Activated CD4-positive, alpha-beta T cell treated with anti-CD3 and anti-CD28 coated beads, Interleukin-2, amount 10 ng/mL, durations not matched to agents 7 days and 5 days (primary cell): ENCODE measurements at regions of chr3 and their contacts with region 1.

Region 1: GRCh38 chr3:128680602-128681368 is 30.2 kb upstream of the RPN1 start:
- DNase-seq: peak; percentile 97
- H3K4me3 Mint-ChIP-seq: peak overlapping the region; percentile 85
- H3K27ac Mint-ChIP-seq: peak overlapping the region; percentile 95
- H3K4me1 Mint-ChIP-seq: peaks cover 42% of the 10 kb centered on the region
- H3K27me3 Mint-ChIP-seq: peaks cover 2% of the 10 kb centered on the region

Region 2: DNA sequence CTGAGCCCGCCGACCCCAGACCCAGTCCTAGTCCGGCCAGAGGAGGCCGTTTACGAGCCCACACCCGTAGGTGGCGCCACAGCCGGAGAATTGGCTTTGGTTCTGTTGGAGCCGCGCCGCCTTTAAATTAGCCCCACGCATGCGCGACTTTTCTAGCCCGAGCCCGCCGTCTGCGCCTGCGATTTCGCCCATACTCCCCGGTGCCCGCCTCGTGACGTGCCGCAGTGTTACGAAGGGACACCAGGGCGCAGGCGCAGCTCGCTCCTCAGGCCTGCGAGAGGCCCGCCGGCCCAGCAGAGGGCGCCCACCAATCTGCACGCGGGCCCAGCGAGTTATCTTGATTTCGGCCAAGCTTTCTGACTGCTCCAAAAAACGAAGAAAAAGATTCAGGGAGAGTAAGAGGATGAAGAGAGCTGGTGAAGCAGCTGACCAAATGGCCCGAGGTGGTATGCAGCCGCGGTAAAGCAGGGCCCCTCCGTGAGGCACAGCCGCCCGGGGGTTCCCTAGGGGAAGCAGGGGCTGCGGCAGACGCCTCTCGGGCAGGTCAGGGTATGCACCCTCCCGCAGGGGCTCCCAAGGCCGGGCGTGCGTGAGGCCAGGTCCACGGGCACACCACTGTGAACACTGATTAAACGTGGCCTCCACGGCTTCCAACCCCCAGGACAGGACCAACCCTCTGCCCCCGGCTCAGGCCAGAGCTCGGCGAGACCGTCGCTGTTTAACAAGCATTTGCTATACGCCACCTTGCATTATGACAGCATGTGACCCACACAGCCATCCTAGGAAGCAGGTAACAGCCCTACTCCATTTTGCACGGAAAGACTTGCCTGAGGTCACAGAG is 63.0 kb before region 1 on chr3:
- CTCF ChIA-PET with region 1: interaction called, 13 read pairs
- POLR2A ChIA-PET with region 1: no interaction called
- DNase-seq: peak; percentile 99
- H3K4me3 Mint-ChIP-seq: peak overlapping the region; percentile 83
- H3K27ac Mint-ChIP-seq: peak overlapping the region; percentile 88
- H3K4me1 Mint-ChIP-seq: peaks cover 39% of the 10 kb centered on the region
- H3K27me3 Mint-ChIP-seq: no peaks in the 10 kb centered on the region

Region 3: GRCh38 chr3:128667641-128668040 is 13.1 kb before region 1 on chr3:
- CTCF ChIA-PET with region 1: interaction called, 17 read pairs
- POLR2A ChIA-PET with region 1: no interaction called
- DNase-seq: no peak
- H3K4me3 Mint-ChIP-seq: no peak overlapping the region
- H3K27ac Mint-ChIP-seq: no peak overlapping the region
- H3K4me1 Mint-ChIP-seq: peaks cover 1% of the 10 kb centered on the region
- H3K27me3 Mint-ChIP-seq: peaks cover 22% of the 10 kb centered on the region

Region 4: DNA sequence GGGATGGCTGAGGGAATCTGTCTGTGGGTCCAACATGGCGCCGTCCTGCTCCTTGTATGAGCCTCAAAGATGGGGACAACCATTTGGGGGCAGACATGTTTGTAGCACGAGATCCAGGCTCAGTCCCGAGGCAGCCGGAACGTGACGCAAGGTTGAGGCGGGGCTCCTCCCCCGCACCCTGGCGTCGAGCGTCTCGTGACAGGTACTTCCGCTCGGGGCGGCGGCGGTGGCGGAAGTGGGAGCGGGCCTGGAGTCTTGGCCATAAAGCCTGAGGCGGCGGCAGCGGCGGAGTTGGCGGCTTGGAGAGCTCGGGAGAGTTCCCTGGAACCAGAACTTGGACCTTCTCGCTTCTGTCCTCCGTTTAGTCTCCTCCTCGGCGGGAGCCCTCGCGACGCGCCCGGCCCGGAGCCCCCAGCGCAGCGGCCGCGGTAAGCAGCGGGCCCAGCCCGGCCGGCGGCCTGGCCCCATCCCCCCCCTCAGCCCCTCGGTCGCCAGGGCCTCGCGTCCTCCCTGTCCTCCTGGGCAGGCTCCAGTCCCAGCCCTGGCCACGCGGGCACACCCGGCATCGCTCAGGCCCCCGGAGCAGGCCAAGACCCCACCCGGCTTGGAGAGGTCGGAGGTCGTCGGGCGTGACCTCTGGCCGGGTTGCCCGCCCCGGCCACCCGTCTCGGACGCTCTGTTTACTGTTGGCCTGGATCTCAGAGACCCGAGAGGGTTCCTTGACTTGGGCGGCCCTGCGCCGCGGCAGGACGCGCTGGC is 45.3 kb after region 1 on chr3 and contains the start of gene RAB7A:
- CTCF ChIA-PET with region 1: interaction called, 12 read pairs
- POLR2A ChIA-PET with region 1: interaction called, 4 read pairs
- DNase-seq: peak; percentile 98
- H3K4me3 Mint-ChIP-seq: peak within 1 kb of the TSS; percentile 81
- H3K27ac Mint-ChIP-seq: peak within 1 kb of the TSS; percentile 93
- H3K4me1 Mint-ChIP-seq: peaks cover 55% of the 10 kb centered on the region
- H3K27me3 Mint-ChIP-seq: peaks cover 2% of the 10 kb centered on the region
- total RNA-seq, gene RAB7A: 226 to 264 TPM

Region 5: DNA sequence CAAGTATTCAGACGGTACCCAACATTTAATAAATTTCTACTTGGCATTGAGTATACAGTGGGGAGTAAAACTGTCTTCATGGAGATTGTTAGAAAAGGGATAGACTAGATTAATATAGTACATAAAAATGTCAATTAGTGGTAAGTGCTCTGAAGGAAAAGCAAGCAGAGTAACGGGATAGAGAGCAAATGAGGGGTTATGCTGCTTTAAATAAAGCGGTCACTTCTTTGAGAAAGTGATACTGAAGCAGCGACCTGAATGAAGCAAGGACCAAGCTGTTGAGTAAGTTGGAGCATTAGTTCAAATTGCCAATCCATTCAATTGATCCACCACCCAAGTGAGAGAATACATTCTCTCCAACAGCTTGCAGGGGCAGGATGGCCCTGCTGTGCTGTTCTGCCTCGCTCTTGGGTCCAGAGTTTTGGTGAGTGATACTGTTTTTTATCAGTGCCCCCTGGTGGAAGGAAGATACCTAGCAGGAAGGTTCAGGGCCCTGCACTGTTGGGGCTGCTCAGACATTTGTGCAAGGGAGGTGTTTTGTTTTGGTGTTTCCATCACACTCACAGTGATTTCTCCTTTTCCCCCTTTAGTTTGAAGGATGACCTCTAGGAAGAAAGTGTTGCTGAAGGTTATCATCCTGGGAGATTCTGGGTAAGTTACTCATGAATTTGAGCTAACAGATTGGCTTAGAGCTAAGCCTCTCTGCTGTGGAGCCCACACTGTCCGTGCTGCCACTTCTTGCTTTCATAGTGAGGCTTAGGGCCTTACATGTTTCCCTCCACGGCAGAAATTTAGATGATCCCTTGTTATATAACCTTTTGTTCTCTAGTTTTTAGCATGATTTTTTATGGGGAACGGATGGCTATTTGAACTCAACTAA is 114.2 kb after region 1 on chr3:
- CTCF ChIA-PET with region 1: interaction called, 22 read pairs
- POLR2A ChIA-PET with region 1: interaction called, 4 read pairs
- DNase-seq: peak; percentile 80
- H3K4me3 Mint-ChIP-seq: peak overlapping the region; percentile 1
- H3K27ac Mint-ChIP-seq: peak overlapping the region; percentile 67
- H3K4me1 Mint-ChIP-seq: peaks cover 80% of the 10 kb centered on the region
- H3K27me3 Mint-ChIP-seq: no peaks in the 10 kb centered on the region

Region 6: DNA sequence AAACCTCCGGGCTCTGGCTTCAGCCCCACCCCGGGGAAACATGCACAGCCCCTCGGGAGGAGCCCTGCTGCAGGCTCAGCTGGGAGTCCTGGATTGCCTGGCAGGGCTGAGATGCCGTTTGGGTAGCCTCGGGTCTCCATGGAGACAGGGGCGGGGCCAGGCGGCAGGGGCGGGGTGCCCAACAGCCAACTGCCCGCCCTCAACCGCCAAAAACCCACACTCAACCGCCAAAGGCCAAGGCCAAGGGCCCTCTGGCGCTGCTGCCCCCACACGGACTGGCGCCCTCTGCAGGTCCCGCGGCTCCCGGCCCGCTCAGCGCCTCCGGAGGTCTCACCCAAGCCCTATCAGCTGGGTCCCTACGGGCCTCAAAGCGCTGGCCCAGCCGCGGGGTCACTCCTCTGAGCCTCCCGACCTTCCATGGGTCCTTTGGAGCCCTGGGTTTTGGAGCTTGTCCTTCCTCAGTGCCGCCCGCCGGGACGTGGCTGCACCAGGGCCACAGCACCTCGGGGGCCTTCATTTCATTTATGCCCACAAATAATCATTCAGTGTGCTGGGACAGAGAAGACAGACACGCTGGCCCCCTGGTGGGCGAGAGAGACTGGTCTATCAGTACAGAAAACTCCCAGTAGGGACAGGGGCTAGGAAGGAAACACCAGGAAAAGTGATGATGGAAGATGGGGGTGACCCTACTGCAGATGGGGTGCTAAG is 165.1 kb after region 1 on chr3:
- CTCF ChIA-PET with region 1: interaction called, 23 read pairs
- POLR2A ChIA-PET with region 1: no interaction called
- DNase-seq: peak; percentile 82
- H3K4me3 Mint-ChIP-seq: peak overlapping the region; percentile 61
- H3K27ac Mint-ChIP-seq: peak overlapping the region; percentile 87
- H3K4me1 Mint-ChIP-seq: peaks cover 22% of the 10 kb centered on the region
- H3K27me3 Mint-ChIP-seq: no peaks in the 10 kb centered on the region

Region 7: DNA sequence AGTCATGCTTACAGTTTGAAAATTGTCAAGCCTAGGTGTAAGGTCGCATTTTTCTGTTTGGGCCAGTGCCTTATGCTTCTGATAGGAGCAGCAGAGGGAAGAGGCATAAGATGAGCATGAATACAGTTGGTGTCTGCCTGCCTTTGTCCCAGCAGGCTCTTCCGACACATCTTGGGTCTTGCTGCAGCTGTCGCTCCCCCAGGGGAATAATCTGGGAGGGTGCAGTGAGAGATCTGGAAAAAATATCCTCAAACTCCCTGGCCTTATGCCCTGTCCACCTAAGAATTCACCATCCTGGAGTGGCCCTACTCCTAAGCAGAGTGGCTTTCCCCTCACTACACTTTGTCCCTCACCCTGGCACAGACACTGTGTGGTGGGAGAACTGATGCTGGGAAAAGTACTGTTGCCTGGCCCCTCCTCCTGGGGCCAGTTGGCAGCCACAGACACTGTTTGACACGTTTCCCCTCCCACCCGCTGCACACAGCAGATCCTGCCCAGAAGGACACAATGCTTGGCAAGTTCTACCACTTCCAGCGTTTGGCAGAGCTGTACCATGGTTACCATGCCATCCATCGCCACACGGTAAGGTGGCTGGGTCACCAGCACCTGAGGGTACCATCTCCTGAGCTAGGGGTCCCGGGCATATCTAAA is 826.5 kb after region 1 on chr3:
- CTCF ChIA-PET with region 1: no interaction called
- POLR2A ChIA-PET with region 1: no interaction called
- DNase-seq: no peak
- H3K4me3 Mint-ChIP-seq: no peak overlapping the region
- H3K27ac Mint-ChIP-seq: no peak overlapping the region
- H3K4me1 Mint-ChIP-seq: peaks cover 10% of the 10 kb centered on the region
- H3K27me3 Mint-ChIP-seq: no peaks in the 10 kb centered on the region